ENCODE measurements at regions of chr10 and their contacts with region 1.

Region 1: GRCh38 chr10:76778914-76779795 is 858.5 kb downstream of the KCNMA1 start:
- DNase-seq: no peak
- ATAC-seq: no peak

Region 2: DNA sequence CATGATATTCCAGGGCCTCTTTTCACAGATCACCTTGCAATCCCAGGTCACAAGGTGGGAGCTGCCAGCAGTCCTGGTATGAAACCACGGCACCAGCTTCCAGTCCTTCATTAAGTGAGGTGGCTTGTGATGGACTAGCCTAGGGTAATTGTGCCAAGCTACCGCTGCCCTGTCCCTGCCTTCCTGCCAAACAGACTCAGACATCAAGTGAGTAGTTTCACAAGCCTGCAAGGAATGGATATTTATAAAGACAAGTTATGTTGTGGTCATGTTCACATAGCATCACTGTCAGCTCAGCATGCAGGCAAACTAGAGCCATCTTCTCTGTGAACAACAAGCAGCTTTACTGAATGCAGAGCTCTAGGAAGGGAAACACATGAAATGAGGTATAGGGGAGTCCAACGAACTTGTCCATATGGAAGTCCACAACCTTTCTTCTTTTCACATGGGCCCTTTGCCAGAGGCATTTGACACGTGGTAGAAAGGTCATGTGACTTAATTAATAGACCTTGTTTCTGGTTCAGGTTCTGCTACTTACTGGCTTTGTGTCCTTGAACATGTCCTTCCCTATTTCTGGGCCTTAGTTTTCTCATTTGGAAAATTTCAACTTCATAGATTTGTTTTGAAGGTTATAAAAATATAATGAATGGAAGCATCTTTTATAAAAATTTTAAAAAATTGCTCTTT is 202.7 kb before region 1 on chr10:
- intact Hi-C with region 1: loop called (anchors 10 kb)
- DNase-seq: no peak
- ATAC-seq: peak; percentile 91

Region 3: GRCh38 chr10:76624470-76624869 is 154.7 kb before region 1 on chr10:
- intact Hi-C with region 1: loop called (anchors 5 kb)
- DNase-seq: no peak
- ATAC-seq: no peak

Region 4: GRCh38 chr10:76697923-76698322 is 81.2 kb before region 1 on chr10:
- intact Hi-C with region 1: no loop called
- DNase-seq: no peak
- ATAC-seq: no peak

Region 5: GRCh38 chr10:76882245-76882644 is 103.1 kb after region 1 on chr10:
- intact Hi-C with region 1: loop called (anchors 5 kb)
- DNase-seq: no peak
- ATAC-seq: peak; percentile 53

Region 6: DNA sequence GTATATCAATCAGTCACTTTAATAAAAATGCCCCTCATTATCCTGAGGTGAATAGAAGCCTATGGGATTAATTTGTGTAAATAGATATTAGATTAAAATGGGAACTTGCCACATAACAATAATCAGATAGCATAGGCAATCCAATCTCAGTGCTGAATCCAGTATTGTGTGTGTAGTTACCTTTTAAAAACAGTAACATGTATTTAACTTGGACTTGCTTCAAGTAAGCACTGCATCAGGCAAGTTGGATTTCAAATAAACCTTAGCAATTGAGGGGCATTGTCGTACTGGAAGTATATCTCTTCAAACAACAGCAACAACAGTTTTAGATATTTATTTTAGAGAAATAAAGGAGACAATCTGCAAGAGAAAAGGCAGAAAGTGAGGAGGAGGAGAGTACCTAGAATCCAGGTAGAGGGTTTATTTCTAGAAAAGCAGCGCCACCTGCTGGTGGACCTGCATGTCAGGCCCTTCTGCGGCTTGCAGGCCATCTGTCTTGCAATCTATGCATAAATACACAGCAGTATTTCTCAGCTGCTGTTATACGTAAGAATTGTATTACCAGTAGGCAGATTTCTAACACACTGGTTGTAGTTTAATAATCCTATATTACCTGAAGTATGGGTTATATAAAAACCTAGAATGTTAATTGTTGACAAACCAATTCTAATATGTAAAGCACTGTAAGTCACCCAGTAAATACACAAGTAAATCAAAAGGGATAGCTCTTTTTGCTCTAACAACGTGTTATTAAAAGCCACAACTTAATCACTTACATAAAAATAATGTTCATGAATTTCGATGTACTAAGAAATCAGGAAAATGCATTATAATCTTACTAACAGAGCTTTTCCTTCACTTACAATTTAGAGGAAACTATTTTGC is 205.6 kb after region 1 on chr10:
- intact Hi-C with region 1: loop called (anchors 5 kb)
- DNase-seq: peak; percentile 74
- ATAC-seq: peak; percentile 70

Measured in Right ventricle myocardium inferior (tissue), 1 donor.